Esophagus squamous epithelium (tissue), 5 donors: ENCODE measurements at regions of chr19 and their contacts with region 1.

Region 1: GRCh38 chr19:5987077-5987818 is 9.3 kb upstream of the RANBP3 start:
- DNase-seq: no peak
- H3K4me3 ChIP-seq: peak overlapping the region in 3 of 4 donors; percentile 26 to 58 (median 34)
- H3K27ac ChIP-seq: no peak overlapping the region
- H3K4me1 ChIP-seq: peaks cover 12 to 55% (median 13%) of the 10 kb centered on the region in 3 donors
- H3K27me3 ChIP-seq: no peaks in the 10 kb centered on the region
- CTCF ChIP-seq: peak; percentile 88 to 96 (median 92)
- POLR2A ChIP-seq: no peak

Region 2: DNA sequence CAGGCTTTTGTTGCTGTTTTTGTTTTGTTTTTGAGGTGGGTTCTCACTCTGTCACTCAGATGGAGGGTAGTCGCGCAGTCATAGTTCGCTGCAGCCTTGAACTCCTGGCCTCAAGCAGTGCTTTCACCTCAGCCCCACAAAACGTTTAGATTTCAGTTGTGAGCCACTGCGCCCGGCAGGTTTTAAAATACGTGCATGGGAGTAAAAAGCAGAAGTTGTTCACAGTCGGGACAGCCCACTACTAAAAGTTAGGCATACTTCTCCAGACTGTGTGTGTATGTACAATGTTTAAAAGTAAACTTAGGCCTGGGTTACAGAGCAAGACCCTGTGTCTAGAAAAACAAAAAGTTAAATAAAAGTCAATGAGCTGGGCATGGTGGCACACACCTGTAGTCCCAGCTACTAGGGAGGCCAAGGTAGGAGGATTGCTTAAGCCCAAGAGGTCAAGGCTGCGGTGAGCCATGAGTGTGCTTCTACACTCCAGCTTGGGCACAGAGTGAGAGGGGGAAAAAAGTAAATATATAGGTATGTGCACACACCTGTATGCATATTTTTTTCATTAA is 358.2 kb before region 1 on chr19:
- intact Hi-C with region 1: no loop called
- DNase-seq: no peak
- H3K4me3 ChIP-seq: no peak overlapping the region
- H3K27ac ChIP-seq: peak overlapping the region in 1 of 4 donors; percentile 34
- H3K4me1 ChIP-seq: peaks cover 36 to 100% (median 62%) of the 10 kb centered on the region in 3 donors
- H3K27me3 ChIP-seq: no peaks in the 10 kb centered on the region
- CTCF ChIP-seq: no peak
- POLR2A ChIP-seq: no peak

Region 3: GRCh38 chr19:6021878-6022569 is 34.8 kb after region 1 on chr19:
- intact Hi-C with region 1: loop called (anchors 5 kb)
- DNase-seq: no peak
- H3K4me3 ChIP-seq: no peak overlapping the region
- H3K27ac ChIP-seq: peak overlapping the region in 3 of 4 donors; percentile 17 to 76 (median 44)
- H3K4me1 ChIP-seq: peaks cover 0 to 20% (median 0%) of the 10 kb centered on the region in 3 donors
- H3K27me3 ChIP-seq: no peaks in the 10 kb centered on the region
- CTCF ChIP-seq: peak; percentile 34 to 73 (median 68)
- POLR2A ChIP-seq: no peak

Region 4: DNA sequence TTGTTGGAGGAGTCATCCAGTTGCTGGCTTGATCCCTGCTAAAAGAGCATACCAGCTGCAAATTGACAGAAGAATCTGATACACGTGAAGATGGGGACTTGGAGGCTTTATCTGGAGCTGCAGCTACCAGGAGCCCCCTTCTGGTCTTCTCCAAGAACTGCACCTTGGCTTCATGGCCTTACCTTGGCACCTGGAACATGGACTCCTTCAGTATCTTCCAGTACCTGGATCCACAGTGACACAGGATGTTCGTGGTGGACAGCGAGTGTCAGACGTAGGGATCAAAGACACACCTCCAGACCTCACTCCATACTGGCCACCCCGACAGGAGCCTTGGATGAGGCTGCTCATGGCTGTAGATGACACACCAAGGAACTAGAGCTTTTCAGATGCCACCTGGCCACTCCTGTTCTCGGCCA is 138.3 kb after region 1 on chr19:
- intact Hi-C with region 1: loop called (anchors 10 kb)
- DNase-seq: no peak
- H3K4me3 ChIP-seq: no peak overlapping the region
- H3K27ac ChIP-seq: no peak overlapping the region
- H3K4me1 ChIP-seq: no peaks in the 10 kb centered on the region
- H3K27me3 ChIP-seq: no peaks in the 10 kb centered on the region
- CTCF ChIP-seq: peak; percentile 86 to 98 (median 94)
- POLR2A ChIP-seq: no peak